Activated CD4-positive, alpha-beta memory T cell treated with anti-CD3 and anti-CD28 coated beads for 36 hours (primary cell): ENCODE measurements at regions of chr16 and their contacts with region 1.

Region 1: DNA sequence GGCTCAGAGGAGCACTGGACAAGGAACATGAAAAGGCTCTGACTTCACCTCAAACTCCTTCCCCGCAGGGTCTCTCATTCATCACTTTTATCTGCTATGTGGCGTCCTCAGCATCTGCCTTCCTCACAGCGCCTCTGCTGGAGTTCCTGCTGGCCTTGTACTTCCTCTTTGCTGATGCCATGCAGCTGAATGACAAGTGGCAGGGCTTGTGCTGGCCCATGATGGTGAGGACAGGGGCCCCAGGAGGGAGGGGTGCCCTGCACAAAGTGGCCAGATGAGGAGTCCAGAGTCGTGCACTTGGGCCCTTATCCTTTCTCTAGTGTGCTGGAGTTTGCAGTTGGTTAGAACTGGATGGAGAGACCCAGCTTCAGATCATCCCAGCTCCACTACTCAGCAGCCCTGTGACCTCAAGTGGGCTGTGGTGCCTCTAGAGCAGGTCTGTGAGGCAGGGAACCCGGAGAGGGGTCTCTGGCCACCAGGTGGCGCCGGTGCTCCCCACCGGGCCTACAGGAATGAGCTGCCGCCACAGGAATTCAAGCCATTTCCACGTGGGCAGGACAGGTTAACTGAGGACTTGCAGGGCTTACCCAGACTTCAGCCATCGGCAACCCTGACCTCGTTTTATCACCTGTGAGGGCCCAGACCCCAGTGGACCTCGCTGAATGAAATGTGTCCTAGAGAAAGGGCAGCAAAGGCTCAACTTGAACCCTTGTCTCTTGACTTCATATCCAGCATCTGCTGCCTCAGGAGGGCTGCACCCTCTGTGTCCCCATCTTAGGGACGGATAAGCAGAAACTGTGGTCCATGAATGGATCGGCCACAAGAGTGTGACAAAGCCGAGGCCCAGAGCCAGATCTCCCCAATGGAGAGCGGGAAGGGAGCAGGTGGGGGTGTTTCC is 4.0 kb downstream of the CMTM3 start:
- DNase-seq: peak; percentile 89
- H3K4me3 Mint-ChIP-seq: no peak overlapping the region
- H3K27ac Mint-ChIP-seq: peak overlapping the region; percentile 62
- H3K4me1 Mint-ChIP-seq: peaks cover 34% of the 10 kb centered on the region
- H3K27me3 Mint-ChIP-seq: no peaks in the 10 kb centered on the region

Region 2: DNA sequence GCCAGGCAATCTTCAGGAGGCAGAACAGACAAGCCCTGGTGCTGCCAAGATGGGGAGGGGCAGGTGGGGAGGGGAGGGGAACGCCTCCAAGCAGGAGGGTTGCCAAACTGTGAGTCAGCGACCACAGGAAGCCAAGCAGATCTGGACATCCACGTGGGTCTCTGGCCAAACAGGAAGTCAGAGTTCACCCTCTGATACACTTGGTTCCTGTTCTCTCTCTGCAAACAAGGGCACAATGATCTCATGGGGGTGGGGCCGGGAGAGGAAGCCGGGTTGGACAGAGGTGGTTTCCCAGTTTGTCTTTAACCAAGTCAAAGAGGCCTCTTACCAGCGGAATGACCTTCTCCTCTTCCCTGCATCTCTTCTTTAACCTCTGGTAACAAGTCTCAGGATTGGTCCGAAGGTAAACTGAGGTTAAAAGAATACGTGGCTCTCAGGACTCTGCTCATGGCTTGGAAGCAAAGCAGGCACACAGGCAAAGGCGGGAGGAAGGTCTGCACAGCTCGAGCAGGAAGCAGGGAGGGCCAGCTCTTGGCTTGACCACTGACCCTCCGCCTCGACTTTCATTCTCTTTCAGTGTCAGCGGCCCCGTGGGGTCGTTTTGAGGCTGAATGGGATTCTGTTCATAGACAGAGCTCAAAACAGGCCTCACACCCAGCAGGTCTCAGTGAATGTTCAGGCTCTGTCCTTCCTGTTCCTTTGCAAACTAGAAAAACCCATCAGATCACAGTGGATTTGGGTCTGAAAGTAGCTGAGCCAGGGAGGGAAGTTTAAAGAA is 91.5 kb before region 1 on chr16:
- CTCF ChIA-PET with region 1: interaction called, 13 read pairs
- POLR2A ChIA-PET with region 1: interaction called, 3 read pairs
- intact Hi-C with region 1: loop called (anchors 2 kb)
- DNase-seq: peak; percentile 95
- H3K4me3 Mint-ChIP-seq: peak overlapping the region; percentile 87
- H3K27ac Mint-ChIP-seq: peak overlapping the region; percentile 99
- H3K4me1 Mint-ChIP-seq: peaks cover 71% of the 10 kb centered on the region
- H3K27me3 Mint-ChIP-seq: no peaks in the 10 kb centered on the region

Region 3: DNA sequence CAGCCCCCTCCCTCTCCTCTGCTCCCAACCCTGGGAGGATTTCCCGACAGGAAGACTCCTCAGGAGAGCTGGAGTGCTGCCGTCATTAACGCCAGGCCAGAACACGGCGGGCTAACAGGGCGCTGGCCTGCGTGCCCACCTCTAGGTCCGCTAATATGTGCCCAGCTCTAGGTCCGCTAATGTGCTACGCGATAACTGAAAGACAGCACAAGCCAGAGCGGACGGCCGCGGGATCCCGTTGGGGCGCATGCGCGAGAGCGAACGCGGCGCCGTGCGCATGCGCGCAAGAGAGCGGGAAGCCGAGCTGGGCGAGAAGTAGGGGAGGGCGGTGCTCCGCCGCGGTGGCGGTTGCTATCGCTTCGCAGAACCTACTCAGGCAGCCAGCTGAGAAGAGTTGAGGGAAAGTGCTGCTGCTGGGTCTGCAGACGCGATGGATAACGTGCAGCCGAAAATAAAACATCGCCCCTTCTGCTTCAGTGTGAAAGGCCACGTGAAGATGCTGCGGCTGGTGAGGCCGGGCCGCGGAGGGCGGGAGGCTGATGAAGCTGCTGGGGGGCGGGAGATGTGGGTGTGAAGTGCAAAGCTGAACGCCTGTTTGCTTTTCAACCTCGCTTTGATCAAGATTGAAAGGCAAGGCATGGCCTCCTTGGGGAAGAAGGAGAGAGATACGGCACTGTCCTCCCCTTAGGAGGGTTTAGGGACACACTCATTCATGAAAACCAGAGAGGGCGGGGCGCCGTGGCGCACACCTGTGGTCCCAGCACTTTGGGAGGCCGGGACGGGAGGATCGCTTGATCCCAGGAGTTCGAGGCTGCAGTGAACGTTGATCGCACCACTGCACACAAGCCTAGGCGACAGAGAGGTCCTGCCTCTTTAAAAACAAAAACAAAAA is 56.0 kb before region 1 on chr16 and contains the start of gene CKLF:
- CTCF ChIA-PET with region 1: interaction called, 14 read pairs
- POLR2A ChIA-PET with region 1: interaction called, 15 read pairs
- intact Hi-C with region 1: loop called (anchors 1 kb)
- DNase-seq: peak; percentile 95
- H3K4me3 Mint-ChIP-seq: peak within 1 kb of the TSS; percentile 95
- H3K27ac Mint-ChIP-seq: peak within 1 kb of the TSS; percentile 96
- H3K4me1 Mint-ChIP-seq: peaks cover 65% of the 10 kb centered on the region
- H3K27me3 Mint-ChIP-seq: peaks cover 2% of the 10 kb centered on the region
- total RNA-seq, gene CKLF: 167 to 173 TPM

Region 4: GRCh38 chr16:66588981-66589713 is 19.3 kb before region 1 on chr16:
- CTCF ChIA-PET with region 1: interaction called, 18 read pairs
- POLR2A ChIA-PET with region 1: interaction called, 5 read pairs
- intact Hi-C with region 1: loop called (anchors 2 kb)
- DNase-seq: peak; percentile 84
- H3K4me3 Mint-ChIP-seq: peak overlapping the region; percentile 64
- H3K27ac Mint-ChIP-seq: peak overlapping the region; percentile 39
- H3K4me1 Mint-ChIP-seq: peaks cover 23% of the 10 kb centered on the region
- H3K27me3 Mint-ChIP-seq: no peaks in the 10 kb centered on the region

Region 5: DNA sequence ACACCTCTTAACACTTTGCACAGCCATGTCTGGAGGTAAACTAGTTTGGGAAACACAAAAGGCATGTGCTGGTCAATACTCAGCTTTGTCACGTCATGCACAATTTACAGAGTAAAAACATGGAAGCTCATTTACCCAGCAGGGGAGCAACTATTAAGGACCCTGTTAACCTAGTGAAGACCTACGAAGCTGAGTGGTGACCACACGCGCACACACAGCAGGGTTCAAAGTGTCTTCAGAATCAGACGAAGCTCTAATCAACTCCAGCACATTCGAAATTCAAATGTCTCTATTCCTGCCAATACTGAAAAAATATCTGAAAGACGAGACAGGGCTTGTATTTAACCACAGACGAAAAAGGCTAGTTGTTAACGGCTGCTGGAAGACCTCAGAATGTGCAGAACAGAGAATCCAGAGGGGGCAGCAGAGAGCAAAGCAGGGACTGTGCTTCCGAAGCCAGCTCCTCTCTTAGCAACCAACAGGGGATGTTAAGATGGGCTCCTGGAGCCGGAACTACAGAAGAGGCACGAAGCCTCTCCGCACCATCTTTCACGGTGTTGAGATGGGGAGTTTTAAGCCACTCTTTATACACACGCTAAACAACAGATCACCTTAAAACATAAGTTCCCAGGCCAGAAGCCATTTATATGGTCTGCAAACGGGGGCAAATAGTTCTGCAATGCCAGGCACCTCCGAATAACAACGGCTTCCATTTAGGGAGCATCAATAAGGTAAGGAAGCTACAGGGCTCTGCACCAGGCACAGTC is 42.4 kb after region 1 on chr16:
- CTCF ChIA-PET with region 1: interaction called, 24 read pairs
- POLR2A ChIA-PET with region 1: no interaction called
- intact Hi-C with region 1: loop called (anchors 2 kb)
- DNase-seq: peak; percentile 86
- H3K4me3 Mint-ChIP-seq: peak overlapping the region; percentile 58
- H3K27ac Mint-ChIP-seq: no peak overlapping the region
- H3K4me1 Mint-ChIP-seq: peaks cover 10% of the 10 kb centered on the region
- H3K27me3 Mint-ChIP-seq: peaks cover 5% of the 10 kb centered on the region

Region 6: DNA sequence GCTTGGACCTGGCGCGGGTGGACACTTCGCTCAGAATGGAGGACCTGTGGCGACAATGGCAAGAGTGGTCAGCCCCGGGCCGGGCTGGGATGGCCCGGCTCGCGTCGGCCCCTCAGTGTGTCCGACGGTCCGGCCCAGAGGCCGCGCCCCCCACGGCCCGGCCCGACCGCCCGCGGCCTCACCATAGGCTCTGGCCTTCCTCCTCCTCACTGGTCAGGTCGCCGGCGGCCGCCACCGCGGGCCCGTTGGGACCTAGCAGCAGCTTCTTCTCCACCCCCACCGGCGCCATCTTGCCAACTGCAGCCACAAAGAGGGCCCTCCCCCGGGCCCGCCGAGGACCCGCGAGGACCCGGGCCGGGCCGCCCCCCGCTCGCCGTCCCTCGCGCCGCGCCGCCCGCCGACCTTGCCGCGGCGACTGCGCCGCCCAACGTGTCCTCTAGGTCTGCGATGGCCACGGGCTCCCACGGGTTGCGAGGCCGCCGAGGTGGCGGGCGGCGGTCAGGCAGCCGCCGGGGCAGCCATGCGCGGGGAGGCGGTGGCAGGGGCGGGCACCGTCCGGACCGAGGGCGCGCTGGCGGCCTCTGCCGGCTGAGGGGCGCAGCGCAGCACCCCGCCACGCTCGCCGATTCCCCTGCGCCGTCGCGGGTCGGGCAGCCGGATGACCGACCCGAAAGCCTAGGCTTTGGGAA is 143.0 kb after region 1 on chr16 and contains the start of gene DYNC1LI2:
- CTCF ChIA-PET with region 1: interaction called, 10 read pairs
- POLR2A ChIA-PET with region 1: no interaction called
- intact Hi-C with region 1: loop called (anchors 5 kb)
- DNase-seq: peak; percentile 84
- H3K4me3 Mint-ChIP-seq: peak within 1 kb of the TSS; percentile 83
- H3K27ac Mint-ChIP-seq: peak within 1 kb of the TSS; percentile 74
- H3K4me1 Mint-ChIP-seq: peaks cover 37% of the 10 kb centered on the region
- H3K27me3 Mint-ChIP-seq: peaks cover 4% of the 10 kb centered on the region
- total RNA-seq, gene DYNC1LI2: 37.9 to 39.1 TPM